Natural killer cell (primary cell): ENCODE measurements at regions of chr1 and their contacts with region 1.

Region 1: GRCh38 chr1:160607011-160607671 is 27.8 kb upstream of the CD84 start:
- DNase-seq: peak; percentile 28 to 91
- ATAC-seq: peak; percentile 99 to 100 (median 100)
- H3K4me3 ChIP-seq: no peak overlapping the region
- H3K4me3 Mint-ChIP-seq: no peak overlapping the region
- H3K27ac ChIP-seq: peak overlapping the region; percentile 11
- H3K27ac Mint-ChIP-seq: peak overlapping the region; percentile 82 to 84
- H3K4me1 ChIP-seq: peaks cover 12% of the 10 kb centered on the region
- H3K4me1 Mint-ChIP-seq: peaks cover 11 to 12% of the 10 kb centered on the region in 2 donors
- H3K27me3 ChIP-seq: no peaks in the 10 kb centered on the region
- H3K27me3 Mint-ChIP-seq: peaks cover 0 to 3% of the 10 kb centered on the region in 2 donors
- CTCF ChIP-seq: peak; percentile 78

Region 2: GRCh38 chr1:160193091-160193819 is 413.9 kb before region 1 on chr1:
- intact Hi-C with region 1: loop called (anchors 2 kb)
- DNase-seq: peak; percentile 78 to 89
- ATAC-seq: peak; percentile 85 to 99 (median 97)
- H3K4me3 ChIP-seq: no peak overlapping the region
- H3K4me3 Mint-ChIP-seq: no peak overlapping the region
- H3K27ac ChIP-seq: no peak overlapping the region
- H3K27ac Mint-ChIP-seq: no peak overlapping the region
- H3K4me1 ChIP-seq: peaks cover 7% of the 10 kb centered on the region
- H3K4me1 Mint-ChIP-seq: no peaks in the 10 kb centered on the region
- H3K27me3 ChIP-seq: no peaks in the 10 kb centered on the region
- H3K27me3 Mint-ChIP-seq: peaks cover 0 to 2% of the 10 kb centered on the region in 2 donors
- CTCF ChIP-seq: peak; percentile 88

Region 3: DNA sequence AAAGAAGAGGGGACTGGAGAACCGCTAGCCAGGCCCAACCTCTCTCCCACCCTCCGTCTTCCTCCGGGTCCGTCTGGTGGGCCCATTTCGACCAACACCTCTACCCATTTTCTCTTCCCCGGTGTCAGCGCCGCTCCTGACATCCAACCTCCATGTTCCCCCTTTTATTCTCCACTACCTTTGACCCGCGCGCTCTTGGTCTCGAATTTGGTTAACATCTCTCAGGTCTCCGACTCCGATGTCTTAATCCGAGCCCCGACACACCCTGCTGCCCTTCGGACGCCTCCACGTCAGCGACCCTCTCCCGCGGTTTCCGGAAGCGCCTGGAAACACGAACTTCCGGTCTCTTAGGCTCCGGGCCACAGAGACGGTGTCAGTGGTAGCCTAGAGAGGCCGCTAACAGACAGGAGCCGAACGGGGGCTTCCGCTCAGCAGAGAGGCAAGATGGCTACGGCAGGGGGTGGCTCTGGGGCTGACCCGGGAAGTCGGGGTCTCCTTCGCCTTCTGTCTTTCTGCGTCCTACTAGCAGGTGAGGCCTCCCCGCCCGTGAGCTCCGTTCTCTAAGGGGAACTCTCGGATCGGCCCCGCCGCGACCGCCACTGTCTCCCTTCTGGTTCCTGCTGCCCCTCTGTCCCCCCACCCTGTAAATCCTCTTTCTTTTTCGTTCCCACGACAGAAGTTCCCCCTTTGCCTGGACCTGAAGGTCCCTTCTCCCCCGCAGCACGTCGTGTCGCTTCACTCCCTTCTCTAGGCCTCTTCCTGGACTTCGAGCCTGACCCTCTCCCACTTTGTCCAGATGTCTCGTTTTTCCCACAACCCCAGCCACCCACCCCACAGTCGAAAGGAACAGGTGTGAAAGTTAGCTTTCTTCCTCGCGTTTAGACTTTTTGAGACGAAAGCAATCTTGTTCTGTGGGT is 263.9 kb before region 1 on chr1 and contains the starts of genes COPA and NCSTN:
- intact Hi-C with region 1: loop called (anchors 2 kb)
- DNase-seq: peak; percentile 83 to 96
- ATAC-seq: peak; percentile 95 to 99 (median 96)
- H3K4me3 ChIP-seq: peak within 1 kb of the TSS; percentile 89
- H3K4me3 Mint-ChIP-seq: peak within 1 kb of the TSS; percentile 100
- H3K27ac ChIP-seq: peak within 1 kb of the TSS; percentile 93
- H3K27ac Mint-ChIP-seq: peak within 1 kb of the TSS; percentile 99 to 100
- H3K4me1 ChIP-seq: peaks cover 16% of the 10 kb centered on the region
- H3K4me1 Mint-ChIP-seq: peaks cover 40 to 45% of the 10 kb centered on the region in 2 donors
- H3K27me3 ChIP-seq: no peaks in the 10 kb centered on the region
- H3K27me3 Mint-ChIP-seq: no peaks in the 10 kb centered on the region
- CTCF ChIP-seq: no peak
- total RNA-seq, gene COPA: 140 to 167 (median 148) TPM
- total RNA-seq, gene NCSTN: 104 to 140 (median 110) TPM

Region 4: GRCh38 chr1:160376525-160377131 is 230.5 kb before region 1 on chr1:
- intact Hi-C with region 1: loop called (anchors 1 kb)
- DNase-seq: peak in 1 of 2 donors; percentile 76
- ATAC-seq: peak; percentile 63 to 72 (median 64)
- H3K4me3 ChIP-seq: no peak overlapping the region
- H3K4me3 Mint-ChIP-seq: peak overlapping the region; percentile 35
- H3K27ac ChIP-seq: no peak overlapping the region
- H3K27ac Mint-ChIP-seq: peak overlapping the region in 1 of 2 donors; percentile 88
- H3K4me1 ChIP-seq: peaks cover 21% of the 10 kb centered on the region
- H3K4me1 Mint-ChIP-seq: peaks cover 15 to 18% of the 10 kb centered on the region in 2 donors
- H3K27me3 ChIP-seq: no peaks in the 10 kb centered on the region
- H3K27me3 Mint-ChIP-seq: peaks cover 0 to 13% of the 10 kb centered on the region in 2 donors
- CTCF ChIP-seq: peak; percentile 77

Region 5: DNA sequence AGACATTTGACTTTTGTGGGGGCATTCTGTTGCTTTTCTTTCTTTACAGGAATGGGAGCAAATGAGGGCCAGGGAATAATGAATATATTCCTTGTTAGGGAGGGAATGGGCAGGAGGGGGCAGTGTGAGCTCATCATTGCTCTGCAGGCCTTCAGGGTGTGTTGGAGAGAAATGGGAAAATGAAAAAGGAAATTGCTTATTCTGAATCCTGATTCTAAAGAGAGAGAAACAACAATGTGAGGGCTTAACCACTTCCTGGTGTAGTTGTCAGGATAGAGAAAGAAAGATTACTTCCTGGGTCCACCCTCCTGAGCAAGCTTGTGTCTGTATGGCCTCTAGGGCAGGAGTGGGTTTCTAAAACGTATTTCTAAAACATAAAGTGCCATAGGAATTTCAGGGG is 178.5 kb before region 1 on chr1:
- intact Hi-C with region 1: loop called (anchors 1 kb)
- DNase-seq: peak in 1 of 2 donors; percentile 72
- ATAC-seq: peak; percentile 32 to 52 (median 41)
- H3K4me3 ChIP-seq: no peak overlapping the region
- H3K4me3 Mint-ChIP-seq: peak overlapping the region; percentile 64
- H3K27ac ChIP-seq: peak overlapping the region; percentile 92
- H3K27ac Mint-ChIP-seq: peak overlapping the region; percentile 90 to 97
- H3K4me1 ChIP-seq: peaks cover 49% of the 10 kb centered on the region
- H3K4me1 Mint-ChIP-seq: peaks cover 58 to 61% of the 10 kb centered on the region in 2 donors
- H3K27me3 ChIP-seq: no peaks in the 10 kb centered on the region
- H3K27me3 Mint-ChIP-seq: no peaks in the 10 kb centered on the region
- CTCF ChIP-seq: peak; percentile 73

Region 6: DNA sequence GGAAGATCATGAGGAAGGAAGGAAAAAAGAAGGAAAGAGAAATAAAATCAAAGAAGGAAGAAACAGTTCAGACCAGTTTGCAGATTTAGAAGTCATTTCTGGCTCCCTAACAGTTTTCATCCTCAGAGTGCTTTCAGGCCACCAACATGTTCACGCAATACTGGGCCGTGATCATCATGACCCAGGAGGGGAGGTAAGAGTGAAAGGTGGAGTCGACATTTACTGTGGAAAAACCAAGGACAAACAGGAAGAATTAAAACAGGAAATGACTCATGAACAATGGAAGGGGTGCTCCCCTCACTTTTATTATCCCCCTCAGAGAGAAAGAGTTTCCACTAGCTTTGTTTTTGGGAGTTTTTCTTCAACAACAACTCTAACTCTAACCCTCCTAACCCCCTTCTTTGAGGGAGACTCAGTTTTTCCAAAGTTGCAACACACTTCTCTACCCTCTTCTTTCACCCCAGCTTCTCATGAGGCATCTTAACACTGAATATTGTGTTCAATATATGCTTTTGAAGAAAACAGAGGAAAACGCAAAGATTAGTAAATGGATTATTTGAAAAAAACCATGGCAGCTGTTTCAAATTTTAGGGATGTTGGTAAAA is 146.4 kb before region 1 on chr1:
- intact Hi-C with region 1: no loop called
- DNase-seq: peak in 1 of 2 donors; percentile 32
- ATAC-seq: no peak
- H3K4me3 ChIP-seq: no peak overlapping the region
- H3K4me3 Mint-ChIP-seq: no peak overlapping the region
- H3K27ac ChIP-seq: peak overlapping the region; percentile 31
- H3K27ac Mint-ChIP-seq: no peak overlapping the region
- H3K4me1 ChIP-seq: peaks cover 9% of the 10 kb centered on the region
- H3K4me1 Mint-ChIP-seq: peaks cover 9 to 14% of the 10 kb centered on the region in 2 donors
- H3K27me3 ChIP-seq: no peaks in the 10 kb centered on the region
- H3K27me3 Mint-ChIP-seq: peaks cover 0 to 3% of the 10 kb centered on the region in 2 donors
- CTCF ChIP-seq: no peak

Region 7: GRCh38 chr1:160539990-160540858 is 66.9 kb before region 1 on chr1:
- intact Hi-C with region 1: loop called (anchors 1 kb)
- DNase-seq: peak; percentile 46 to 80
- ATAC-seq: peak; percentile 89 to 96 (median 95)
- H3K4me3 ChIP-seq: no peak overlapping the region
- H3K4me3 Mint-ChIP-seq: peak overlapping the region; percentile 78
- H3K27ac ChIP-seq: peak overlapping the region; percentile 70
- H3K27ac Mint-ChIP-seq: peak overlapping the region; percentile 93 to 95
- H3K4me1 ChIP-seq: peaks cover 41% of the 10 kb centered on the region
- H3K4me1 Mint-ChIP-seq: peaks cover 57 to 58% of the 10 kb centered on the region in 2 donors
- H3K27me3 ChIP-seq: no peaks in the 10 kb centered on the region
- H3K27me3 Mint-ChIP-seq: no peaks in the 10 kb centered on the region
- CTCF ChIP-seq: no peak

Region 8: GRCh38 chr1:160646711-160647328 is 39.7 kb after region 1 on chr1 and contains the start of gene SLAMF1:
- intact Hi-C with region 1: no loop called
- DNase-seq: peak in 1 of 2 donors; percentile 72
- ATAC-seq: peak in 2 of 3 donors; percentile 28 to 46
- H3K4me3 ChIP-seq: peak within 1 kb of the TSS; percentile 48
- H3K4me3 Mint-ChIP-seq: peak within 1 kb of the TSS; percentile 50
- H3K27ac ChIP-seq: peak within 1 kb of the TSS; percentile 69
- H3K27ac Mint-ChIP-seq: no peak within 1 kb of the TSS
- H3K4me1 ChIP-seq: peaks cover 10% of the 10 kb centered on the region
- H3K4me1 Mint-ChIP-seq: peaks cover 17 to 27% of the 10 kb centered on the region in 2 donors
- H3K27me3 ChIP-seq: no peaks in the 10 kb centered on the region
- H3K27me3 Mint-ChIP-seq: peaks cover 8 to 33% of the 10 kb centered on the region in 2 donors
- CTCF ChIP-seq: no peak
- total RNA-seq, gene SLAMF1: 1.1 to 3.5 (median 2.1) TPM